Activated naive CD4-positive, alpha-beta T cell treated with anti-CD3 and anti-CD28 coated beads for 36 hours (primary cell): ENCODE measurements at regions of chr11 and their contacts with region 1.

Region 1: GRCh38 chr11:47766305-47767227 is 575 bp downstream of the FNBP4 start:
- DNase-seq: peak; percentile 85
- H3K4me3 Mint-ChIP-seq: peak overlapping the region; percentile 99
- H3K27ac Mint-ChIP-seq: peak overlapping the region; percentile 100
- H3K4me1 Mint-ChIP-seq: peaks cover 18% of the 10 kb centered on the region
- H3K27me3 Mint-ChIP-seq: no peaks in the 10 kb centered on the region

Region 2: GRCh38 chr11:47213985-47214564 is 552.5 kb before region 1 on chr11:
- CTCF ChIA-PET with region 1: no interaction called
- intact Hi-C with region 1: loop called (anchors 1 kb)
- DNase-seq: peak; percentile 95
- H3K4me3 Mint-ChIP-seq: peak overlapping the region; percentile 87
- H3K27ac Mint-ChIP-seq: peak overlapping the region; percentile 97
- H3K4me1 Mint-ChIP-seq: peaks cover 30% of the 10 kb centered on the region
- H3K27me3 Mint-ChIP-seq: no peaks in the 10 kb centered on the region

Region 3: DNA sequence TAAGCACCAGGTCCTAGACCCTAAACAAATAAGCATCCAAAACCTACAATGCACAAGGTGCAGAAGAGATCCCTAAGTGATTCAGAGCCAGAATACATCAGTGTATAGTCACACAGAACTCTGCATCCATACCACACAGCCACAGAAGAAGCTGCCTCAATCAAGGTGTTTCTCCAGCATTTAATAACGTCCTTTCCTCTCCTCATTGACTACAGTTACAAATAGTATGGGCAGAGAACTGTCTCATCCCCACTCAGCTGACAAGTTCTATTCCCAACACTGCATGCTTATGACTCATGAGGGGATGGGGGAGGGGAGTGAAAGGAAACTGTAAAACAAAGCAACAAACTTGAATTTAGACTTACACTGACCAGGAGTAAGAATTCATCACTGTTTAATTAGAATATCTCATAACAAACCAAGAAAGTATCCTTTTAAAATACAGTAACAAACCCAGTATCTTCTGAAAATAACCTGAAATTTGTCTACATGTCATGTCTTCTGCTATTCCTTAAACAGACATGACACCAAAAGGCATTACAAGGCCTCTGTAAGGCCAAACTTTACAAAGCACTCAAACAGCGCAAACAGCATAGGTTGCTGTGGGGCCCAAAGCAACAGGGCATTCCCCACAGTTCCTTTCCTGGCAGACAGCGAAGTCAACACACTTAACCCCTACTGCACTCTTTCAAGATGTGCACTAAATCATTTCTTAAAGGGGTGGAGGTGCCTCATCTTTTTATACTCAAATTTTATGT is 242.9 kb before region 1 on chr11:
- CTCF ChIA-PET with region 1: no interaction called
- intact Hi-C with region 1: loop called (anchors 1 kb)
- DNase-seq: peak; percentile 82
- H3K4me3 Mint-ChIP-seq: peak overlapping the region; percentile 57
- H3K27ac Mint-ChIP-seq: peak overlapping the region; percentile 90
- H3K4me1 Mint-ChIP-seq: peaks cover 79% of the 10 kb centered on the region
- H3K27me3 Mint-ChIP-seq: no peaks in the 10 kb centered on the region

Region 4: GRCh38 chr11:47578524-47579460 is 187.8 kb before region 1 on chr11 and contains the starts of genes KBTBD4 and NDUFS3:
- CTCF ChIA-PET with region 1: no interaction called
- intact Hi-C with region 1: loop called (anchors 1 kb)
- DNase-seq: peak; percentile 90
- H3K4me3 Mint-ChIP-seq: peak within 1 kb of the TSS; percentile 97
- H3K27ac Mint-ChIP-seq: peak within 1 kb of the TSS; percentile 97
- H3K4me1 Mint-ChIP-seq: peaks cover 44% of the 10 kb centered on the region
- H3K27me3 Mint-ChIP-seq: no peaks in the 10 kb centered on the region
- total RNA-seq, gene KBTBD4: 13.8 to 15.4 TPM
- total RNA-seq, gene NDUFS3: 123 to 124 TPM

Region 5: GRCh38 chr11:47797633-47798032 is 31.1 kb after region 1 on chr11:
- CTCF ChIA-PET with region 1: no interaction called
- intact Hi-C with region 1: loop called (anchors 1 kb)
- DNase-seq: peak; percentile 80
- H3K4me3 Mint-ChIP-seq: no peak overlapping the region
- H3K27ac Mint-ChIP-seq: peak overlapping the region; percentile 84
- H3K4me1 Mint-ChIP-seq: peaks cover 12% of the 10 kb centered on the region
- H3K27me3 Mint-ChIP-seq: no peaks in the 10 kb centered on the region

Region 6: GRCh38 chr11:47886096-47886495 is 119.5 kb after region 1 on chr11:
- CTCF ChIA-PET with region 1: no interaction called
- intact Hi-C with region 1: no loop called
- DNase-seq: peak; percentile 52
- H3K4me3 Mint-ChIP-seq: no peak overlapping the region
- H3K27ac Mint-ChIP-seq: peak overlapping the region; percentile 75
- H3K4me1 Mint-ChIP-seq: peaks cover 51% of the 10 kb centered on the region
- H3K27me3 Mint-ChIP-seq: no peaks in the 10 kb centered on the region